Common myeloid progenitor, CD34-positive (primary cell): ENCODE measurements at regions of chr1 and their contacts with region 1.

Region 1: DNA sequence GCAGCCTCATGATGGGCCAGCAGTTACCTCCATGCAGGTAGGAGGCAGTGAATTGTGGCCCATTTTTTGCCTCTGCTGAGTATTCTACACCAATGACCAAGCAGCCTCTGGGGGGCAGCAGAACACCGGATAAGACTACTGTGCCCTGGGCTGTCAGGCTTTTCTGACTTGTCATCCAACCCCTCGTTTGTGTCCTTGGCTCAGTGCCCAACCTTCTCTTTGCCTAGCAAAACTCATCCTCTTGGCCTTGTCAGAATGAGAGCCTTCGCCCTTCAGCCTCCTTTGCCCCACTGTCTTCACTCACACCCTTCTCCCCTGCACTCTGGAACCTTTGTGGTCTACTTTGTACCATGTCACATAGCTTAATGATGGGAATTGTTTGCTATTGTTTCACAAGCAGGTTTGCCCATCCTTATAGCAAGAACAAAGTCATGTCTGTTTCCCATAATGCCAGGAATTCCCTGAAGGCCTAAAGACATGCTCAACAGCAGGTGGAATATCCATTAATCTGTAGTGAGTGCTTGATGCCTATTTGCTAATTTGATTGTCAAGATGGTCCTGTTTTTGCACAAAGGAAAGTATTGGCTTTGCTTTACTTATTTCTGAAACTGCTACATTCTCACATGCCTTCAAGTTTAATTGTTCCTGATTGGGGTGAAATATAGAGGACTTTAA is 255.9 kb downstream of the HHAT start:
- DNase-seq: peak; percentile 87 to 95 (median 93)
- H3K4me3 ChIP-seq: no peak overlapping the region
- H3K27ac ChIP-seq: no peak overlapping the region
- H3K4me1 ChIP-seq: peaks cover 10 to 27% (median 19%) of the 10 kb centered on the region in 4 experiments
- H3K27me3 ChIP-seq: no peaks in the 10 kb centered on the region

Region 2: GRCh38 chr1:210527091-210527490 is 57.5 kb before region 1 on chr1:
- CTCF ChIA-PET with region 1: no interaction called
- POLR2A ChIA-PET with region 1: no interaction called
- DNase-seq: no peak
- H3K4me3 ChIP-seq: no peak overlapping the region
- H3K27ac ChIP-seq: no peak overlapping the region
- H3K4me1 ChIP-seq: no peaks in the 10 kb centered on the region
- H3K27me3 ChIP-seq: no peaks in the 10 kb centered on the region

Region 3: DNA sequence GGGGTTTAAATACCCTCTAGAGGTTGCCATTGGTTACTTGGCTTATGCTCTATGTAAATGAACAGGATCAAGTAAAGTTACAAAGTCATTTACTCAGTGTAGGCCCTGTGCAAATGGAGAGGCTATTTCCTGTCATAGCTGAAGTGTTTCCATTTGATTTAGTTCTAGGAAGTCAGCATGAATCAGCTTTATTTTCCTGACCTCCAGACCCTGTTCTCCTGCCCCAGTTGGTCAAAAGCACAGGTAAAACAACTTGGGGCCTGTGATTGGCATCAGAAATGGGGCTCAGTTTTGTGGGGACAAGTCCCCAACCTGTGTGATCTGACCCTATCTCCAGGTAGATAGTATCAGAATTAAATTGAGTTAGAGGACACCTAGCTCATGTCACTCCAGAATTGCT is 15.9 kb before region 1 on chr1:
- CTCF ChIA-PET with region 1: interaction called, 34 read pairs
- POLR2A ChIA-PET with region 1: no interaction called
- DNase-seq: peak in 1 of 3 donors; percentile 19
- H3K4me3 ChIP-seq: no peak overlapping the region
- H3K27ac ChIP-seq: no peak overlapping the region
- H3K4me1 ChIP-seq: peaks cover 0 to 9% (median 3%) of the 10 kb centered on the region in 4 experiments
- H3K27me3 ChIP-seq: no peaks in the 10 kb centered on the region

Region 4: GRCh38 chr1:210726621-210727020 is 142.0 kb after region 1 on chr1:
- CTCF ChIA-PET with region 1: no interaction called
- POLR2A ChIA-PET with region 1: no interaction called
- DNase-seq: peak; percentile 13 to 57 (median 50)
- H3K4me3 ChIP-seq: no peak overlapping the region
- H3K27ac ChIP-seq: no peak overlapping the region
- H3K4me1 ChIP-seq: peaks cover 0 to 5% (median 0%) of the 10 kb centered on the region in 4 experiments
- H3K27me3 ChIP-seq: no peaks in the 10 kb centered on the region